GM10248 (cell line): ENCODE measurements at regions of chr17 and their contacts with region 1.

Region 1: GRCh38 chr17:43224146-43224695 is 4.2 kb downstream of the CCDC200 start:
- DNase-seq: no peak
- CTCF ChIP-seq: no peak

Region 2: GRCh38 chr17:43211480-43212402 is 12.5 kb before region 1 on chr17 and contains the start of gene TMEM106A:
- CTCF ChIA-PET with region 1: interaction called, 13 read pairs
- POLR2A ChIA-PET with region 1: interaction called, 5 read pairs
- DNase-seq: peak; percentile 94
- CTCF ChIP-seq: peak; percentile 6

Region 3: DNA sequence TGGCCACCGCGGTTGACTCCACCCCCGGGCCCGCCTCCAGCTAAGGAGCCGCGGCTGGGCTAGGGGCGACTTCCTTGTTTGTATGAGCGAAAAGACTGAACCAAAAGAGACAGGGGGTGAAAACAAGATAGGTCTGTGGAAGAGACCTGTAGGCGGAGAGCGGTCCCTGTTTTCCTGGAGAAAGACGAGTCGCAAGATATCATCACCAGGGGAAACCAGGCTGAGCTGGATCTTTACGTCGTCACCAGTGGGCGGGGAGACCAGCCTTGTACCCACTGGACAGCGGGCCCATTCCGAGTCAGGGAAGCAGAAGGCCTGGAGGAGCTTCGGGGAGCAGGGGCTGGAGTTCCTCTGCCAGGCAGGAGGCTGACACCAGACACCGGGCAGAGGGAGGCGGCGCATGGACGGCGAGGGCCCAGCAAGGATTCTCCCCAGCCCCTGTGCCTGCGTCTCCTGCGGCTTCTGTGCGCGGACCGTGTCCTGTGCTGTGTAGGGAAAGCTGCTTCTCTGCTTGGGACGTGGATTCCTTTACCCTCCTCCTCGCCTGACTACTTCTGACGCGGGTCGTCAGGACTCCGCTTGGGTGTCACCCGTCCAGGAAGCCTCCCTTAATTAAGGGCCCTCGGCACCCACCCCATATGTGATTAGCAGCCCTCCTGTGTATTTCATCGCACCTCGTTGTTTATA is 164.3 kb after region 1 on chr17:
- CTCF ChIA-PET with region 1: no interaction called
- POLR2A ChIA-PET with region 1: no interaction called
- DNase-seq: peak; percentile 86
- CTCF ChIP-seq: no peak